A549 (cell line): ENCODE measurements at regions of chr4 and their contacts with region 1.

Region 1: DNA sequence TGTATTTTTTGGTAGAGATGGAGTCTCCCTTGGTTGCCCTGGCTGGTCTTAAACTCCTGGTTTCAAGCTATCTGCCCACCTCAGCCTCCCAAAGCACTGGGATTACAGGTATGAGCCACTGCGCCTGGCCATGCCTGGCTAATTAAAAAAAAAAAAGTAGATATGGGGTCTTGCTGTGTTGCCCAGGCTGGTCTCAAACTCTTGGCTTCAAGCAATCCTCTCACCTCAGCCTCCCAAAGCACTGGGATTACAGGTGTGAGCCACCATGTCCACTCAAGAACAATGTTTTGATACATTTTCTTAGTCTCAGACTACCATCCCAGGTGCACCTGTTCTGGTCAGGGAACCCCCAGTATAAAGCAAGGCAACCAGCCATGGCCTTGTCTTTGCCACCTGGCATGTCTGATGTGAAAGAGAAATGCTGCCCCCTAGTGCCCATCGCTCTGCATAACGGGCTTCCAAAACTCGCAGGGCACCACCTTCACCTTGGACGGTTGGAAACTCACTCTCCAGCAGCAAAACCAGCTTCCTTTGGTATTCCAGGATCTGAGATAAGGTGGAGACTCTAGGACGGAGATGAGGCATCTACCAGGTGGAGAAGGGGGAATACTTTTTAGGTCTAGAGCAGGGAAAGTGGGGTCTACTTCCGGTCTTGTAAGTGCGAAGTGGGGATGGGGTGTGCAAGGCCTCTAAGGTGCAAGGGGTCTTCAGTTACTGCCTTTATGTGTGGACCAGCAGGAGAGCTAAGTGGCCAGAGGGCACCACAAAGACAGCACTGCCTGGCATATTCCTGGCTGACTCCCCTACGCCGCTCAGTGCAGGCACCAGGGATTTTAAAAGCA is 47.7 kb upstream of the AFAP1 start:
- DNase-seq: peak; percentile 41 to 75
- ATAC-seq: peak; percentile 82 to 90; a peak in 5 of 6 replicates
- H3K4me3 ChIP-seq: no peak overlapping the region
- H3K27ac ChIP-seq: peak overlapping the region; percentile 45 to 82; a peak in 5 of 6 replicates
- H3K4me1 ChIP-seq: peaks cover 13% of the 10 kb centered on the region; the same call in 2 of the 3 replicates
- CTCF ChIP-seq: peak; percentile 76
- EP300 ChIP-seq: no peak
- POLR2A ChIP-seq: no peak
- RAD21 ChIP-seq: peak; percentile 91 to 95

Region 2: GRCh38 chr4:7546809-7547367 is 440.5 kb before region 1 on chr4:
- CTCF ChIA-PET with region 1: no interaction called
- POLR2A ChIA-PET with region 1: no interaction called
- DNase-seq: no peak
- ATAC-seq: no peak
- H3K4me3 ChIP-seq: no peak overlapping the region
- H3K27ac ChIP-seq: no peak overlapping the region
- H3K4me1 ChIP-seq: no peaks in the 10 kb centered on the region
- CTCF ChIP-seq: no peak
- EP300 ChIP-seq: no peak
- POLR2A ChIP-seq: no peak
- RAD21 ChIP-seq: no peak

Region 3: GRCh38 chr4:7761720-7762119 is 225.6 kb before region 1 on chr4:
- CTCF ChIA-PET with region 1: interaction called, 13 read pairs
- POLR2A ChIA-PET with region 1: no interaction called
- DNase-seq: peak; percentile 49 to 57
- ATAC-seq: peak in 1 of 2 experiments; percentile 82; a peak in 3 of 6 replicates
- H3K4me3 ChIP-seq: no peak overlapping the region
- H3K27ac ChIP-seq: peak overlapping the region in 1 of 2 experiments; percentile 82; a peak in 3 of 6 replicates
- H3K4me1 ChIP-seq: peaks cover 13% of the 10 kb centered on the region
- CTCF ChIP-seq: peak; percentile 43
- EP300 ChIP-seq: no peak
- POLR2A ChIP-seq: no peak
- RAD21 ChIP-seq: peak; percentile 25 to 34; a peak in 2 of 5 replicates

Region 4: GRCh38 chr4:7795983-7796382 is 191.4 kb before region 1 on chr4:
- CTCF ChIA-PET with region 1: interaction called, 94 read pairs
- POLR2A ChIA-PET with region 1: no interaction called
- DNase-seq: no peak
- ATAC-seq: no peak
- H3K4me3 ChIP-seq: no peak overlapping the region
- H3K27ac ChIP-seq: no peak overlapping the region
- H3K4me1 ChIP-seq: no peaks in the 10 kb centered on the region
- CTCF ChIP-seq: no peak
- EP300 ChIP-seq: no peak
- POLR2A ChIP-seq: no peak
- RAD21 ChIP-seq: no peak

Region 5: DNA sequence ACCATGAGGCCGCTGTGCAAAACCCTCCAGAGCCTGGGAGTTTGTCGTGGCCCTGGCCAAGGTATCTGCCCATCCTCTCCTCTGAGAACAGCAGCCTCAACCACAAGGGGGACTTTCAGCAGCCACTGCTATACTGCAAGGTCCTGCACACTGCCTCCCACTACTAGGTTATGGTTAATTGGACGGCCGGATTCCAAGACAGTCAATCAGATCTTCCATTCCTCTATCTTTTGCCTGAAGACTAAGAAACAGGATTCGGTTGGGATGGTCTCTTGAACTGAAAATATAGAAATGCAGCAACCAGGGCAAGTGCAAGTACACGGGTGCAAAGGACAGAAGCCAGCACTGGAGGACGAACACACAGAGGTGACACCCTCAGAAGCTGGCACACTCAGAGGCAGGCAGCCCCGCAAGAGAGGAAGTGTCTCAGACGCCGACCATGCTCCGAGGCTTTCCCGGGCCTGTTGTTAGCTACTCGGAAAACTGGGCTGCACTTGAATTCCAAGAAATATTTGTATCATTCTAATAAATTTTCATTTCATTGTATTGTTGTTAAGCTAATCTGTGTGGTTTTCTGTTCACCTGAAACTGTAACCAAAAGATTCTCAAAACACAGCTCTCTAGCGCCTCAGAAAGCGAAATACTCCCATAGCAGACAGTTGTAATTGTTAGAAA is 111.0 kb before region 1 on chr4:
- CTCF ChIA-PET with region 1: interaction called, 19 read pairs
- POLR2A ChIA-PET with region 1: no interaction called
- DNase-seq: peak; percentile 75 to 85
- ATAC-seq: peak; percentile 90 to 92
- H3K4me3 ChIP-seq: no peak overlapping the region
- H3K27ac ChIP-seq: peak overlapping the region; percentile 88 to 96
- H3K4me1 ChIP-seq: peaks cover 94% of the 10 kb centered on the region
- CTCF ChIP-seq: peak; percentile 42
- EP300 ChIP-seq: no peak
- POLR2A ChIP-seq: no peak
- RAD21 ChIP-seq: peak; percentile 58 to 67

Region 6: GRCh38 chr4:8000721-8001491 is 13.5 kb after region 1 on chr4:
- CTCF ChIA-PET with region 1: interaction called, 29 read pairs
- POLR2A ChIA-PET with region 1: no interaction called
- DNase-seq: no peak
- ATAC-seq: 0 out of 6 replicates have a peak, but pooled peaks of 1 of the 2 experiments have one; percentile 32
- H3K4me3 ChIP-seq: no peak overlapping the region
- H3K27ac ChIP-seq: no peak overlapping the region
- H3K4me1 ChIP-seq: no peaks in the 10 kb centered on the region
- CTCF ChIP-seq: no peak
- EP300 ChIP-seq: no peak
- POLR2A ChIP-seq: no peak
- RAD21 ChIP-seq: no peak